CD8-positive, alpha-beta T cell (primary cell): ENCODE measurements at regions of chr3 and their contacts with region 1.

Region 1: DNA sequence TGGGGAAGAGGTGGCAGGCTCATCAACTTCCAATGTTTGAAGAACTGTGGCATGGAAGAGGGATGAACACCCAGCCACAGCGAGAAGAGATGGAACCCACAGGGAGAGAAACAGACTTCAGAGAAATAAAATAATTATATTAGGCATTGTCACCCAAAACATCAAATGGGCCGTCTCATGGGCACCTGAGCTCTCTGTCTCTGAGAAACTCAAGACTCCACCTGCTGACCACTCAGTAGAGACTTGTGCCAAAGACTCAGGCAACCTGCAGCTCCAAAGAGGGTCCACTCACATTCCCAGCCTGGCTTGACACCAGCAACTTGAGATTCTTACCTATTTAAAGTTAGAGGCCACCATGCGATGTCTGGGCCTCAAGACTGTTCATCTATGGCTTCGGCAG is 12.0 kb downstream of the SEMA5B start:
- DNase-seq: peak in 2 of 9 experiments; percentile 11 to 18
- ATAC-seq: no peak
- H3K4me3 ChIP-seq: no peak overlapping the region
- H3K4me3 Mint-ChIP-seq: no peak overlapping the region
- H3K27ac ChIP-seq: no peak overlapping the region
- H3K27ac Mint-ChIP-seq: no peak overlapping the region
- H3K4me1 ChIP-seq: no peaks in the 10 kb centered on the region
- H3K4me1 Mint-ChIP-seq: no peaks in the 10 kb centered on the region
- H3K27me3 ChIP-seq: no peaks in the 10 kb centered on the region
- H3K27me3 Mint-ChIP-seq: peaks cover 17% of the 10 kb centered on the region
- CTCF ChIP-seq: no peak

Region 2: GRCh38 chr3:123028233-123028828 is 12.8 kb after region 1 on chr3:
- CTCF ChIA-PET with region 1: interaction called, 14 read pairs
- POLR2A ChIA-PET with region 1: no interaction called
- intact Hi-C with region 1: no loop called
- DNase-seq: peak in 3 of 9 experiments; percentile 13 to 54 (median 45)
- ATAC-seq: no peak
- H3K4me3 ChIP-seq: peak overlapping the region; percentile 46 to 49
- H3K4me3 Mint-ChIP-seq: peak overlapping the region; percentile 76
- H3K27ac ChIP-seq: no peak overlapping the region
- H3K27ac Mint-ChIP-seq: no peak overlapping the region
- H3K4me1 ChIP-seq: peaks cover 7% of the 10 kb centered on the region
- H3K4me1 Mint-ChIP-seq: peaks cover 22% of the 10 kb centered on the region
- H3K27me3 ChIP-seq: peaks cover 16 to 28% of the 10 kb centered on the region in 2 experiments
- H3K27me3 Mint-ChIP-seq: peaks cover 56% of the 10 kb centered on the region
- CTCF ChIP-seq: peak; percentile 17